Activated naive CD4-positive, alpha-beta T cell treated with anti-CD3 and anti-CD28 coated beads for 36 hours (primary cell): ENCODE measurements at regions of chr12 and their contacts with region 1.

Region 1: GRCh38 chr12:101823891-101824290 is 6.9 kb downstream of the GNPTAB start:
- DNase-seq: peak; percentile 74
- H3K4me3 Mint-ChIP-seq: no peak overlapping the region
- H3K27ac Mint-ChIP-seq: peak overlapping the region; percentile 48
- H3K4me1 Mint-ChIP-seq: peaks cover 76% of the 10 kb centered on the region
- H3K27me3 Mint-ChIP-seq: no peaks in the 10 kb centered on the region

Region 2: DNA sequence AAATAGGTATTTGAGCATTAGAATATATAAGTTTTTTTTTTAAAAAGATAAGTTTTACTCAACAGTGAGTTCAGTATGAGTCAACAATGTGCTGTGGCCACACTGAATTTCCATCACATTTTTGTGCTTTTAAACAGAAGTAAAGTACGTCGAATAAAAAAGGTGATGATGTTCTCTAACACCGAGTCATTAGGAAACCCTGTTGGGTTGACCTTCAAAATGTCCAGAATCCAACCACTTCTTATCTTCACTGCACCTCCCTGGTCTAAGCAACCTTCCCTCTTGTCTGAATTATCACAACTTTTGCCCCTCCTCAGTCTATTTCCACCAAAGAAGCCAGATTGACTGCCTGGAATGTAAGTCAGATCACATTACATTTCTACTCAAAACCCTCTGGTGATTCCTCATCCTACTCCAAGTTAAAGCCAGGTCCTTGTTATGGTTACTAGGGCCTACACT is 41.6 kb before region 1 on chr12:
- CTCF ChIA-PET with region 1: interaction called, 27 read pairs
- intact Hi-C with region 1: loop called (anchors 1 kb)
- DNase-seq: no peak
- H3K4me3 Mint-ChIP-seq: no peak overlapping the region
- H3K27ac Mint-ChIP-seq: no peak overlapping the region
- H3K4me1 Mint-ChIP-seq: peaks cover 15% of the 10 kb centered on the region
- H3K27me3 Mint-ChIP-seq: no peaks in the 10 kb centered on the region

Region 3: GRCh38 chr12:101792051-101792931 is 31.6 kb before region 1 on chr12:
- CTCF ChIA-PET with region 1: interaction called, 37 read pairs
- intact Hi-C with region 1: loop called (anchors 1 kb)
- DNase-seq: no peak
- H3K4me3 Mint-ChIP-seq: no peak overlapping the region
- H3K27ac Mint-ChIP-seq: no peak overlapping the region
- H3K4me1 Mint-ChIP-seq: peaks cover 22% of the 10 kb centered on the region
- H3K27me3 Mint-ChIP-seq: no peaks in the 10 kb centered on the region